Dendritic cell treated with granulocyte-macrophage colony-stimulating factor and Interleukin-4, amounts not matched to agents 40 ng/mL and 50 ng/mL, for 4 days (primary cell): ENCODE measurements at regions of chr6 and their contacts with region 1.

Region 1: DNA sequence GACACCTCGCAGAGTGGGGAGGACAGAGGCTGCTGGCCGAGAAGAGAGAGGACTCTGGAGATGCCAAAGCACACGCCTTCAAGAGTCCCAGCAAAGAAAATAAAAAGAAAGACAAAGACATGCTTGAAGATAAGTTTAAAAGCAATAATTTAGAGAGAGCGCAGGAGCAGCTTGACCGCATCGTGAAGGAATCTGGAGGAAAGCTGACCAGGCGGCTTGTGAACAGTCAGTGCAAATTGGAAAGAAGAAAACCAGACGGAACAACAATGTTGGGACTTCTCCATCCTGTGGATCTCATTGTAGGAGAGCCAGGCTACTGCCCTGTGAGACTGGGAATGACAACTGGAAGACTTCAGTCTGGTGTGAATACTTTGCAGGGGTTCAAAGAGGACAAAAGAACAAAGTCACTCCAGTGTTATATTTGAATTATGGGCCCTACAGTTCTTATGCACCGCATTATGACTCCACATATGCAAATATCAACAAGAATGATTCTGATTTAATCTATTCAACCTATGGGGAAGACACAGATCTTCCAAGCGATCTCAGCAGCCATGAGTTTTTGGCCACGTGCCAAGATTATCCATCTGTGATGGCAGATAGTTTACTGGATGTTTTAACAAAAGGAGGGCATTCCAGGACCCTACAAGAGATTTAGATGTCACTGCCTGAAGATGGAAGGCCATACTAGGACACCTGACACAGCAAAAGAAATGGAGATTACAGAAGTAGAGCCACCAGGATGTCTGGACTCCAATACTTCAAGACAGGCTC is 52.2 kb downstream of the REV3L start:
- H3K4me3 Mint-ChIP-seq: no peak overlapping the region
- H3K27ac Mint-ChIP-seq: no peak overlapping the region
- H3K4me1 Mint-ChIP-seq: peaks cover 27% of the 10 kb centered on the region
- H3K27me3 Mint-ChIP-seq: no peaks in the 10 kb centered on the region

Region 2: DNA sequence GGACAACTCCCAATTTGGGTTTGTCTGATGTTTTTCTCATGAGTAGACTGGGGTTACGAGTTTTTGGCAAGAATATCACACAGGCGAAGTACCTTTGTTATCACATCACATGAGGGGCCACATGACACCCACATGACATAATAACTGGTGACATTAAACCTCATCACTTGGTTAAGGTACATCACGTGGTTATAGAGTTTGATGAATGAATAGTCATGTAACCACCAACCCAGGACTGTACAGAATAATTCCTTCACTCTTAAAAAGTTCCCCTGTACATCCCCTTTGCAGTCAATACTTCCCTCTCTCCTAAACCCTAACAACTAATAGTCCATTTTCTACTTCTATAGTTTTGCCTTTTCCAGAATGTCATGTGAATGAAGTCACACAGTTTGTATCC is 31.2 kb before region 1 on chr6:
- intact Hi-C with region 1: loop called (anchors 5 kb)
- H3K4me3 Mint-ChIP-seq: no peak overlapping the region
- H3K27ac Mint-ChIP-seq: no peak overlapping the region
- H3K4me1 Mint-ChIP-seq: no peaks in the 10 kb centered on the region
- H3K27me3 Mint-ChIP-seq: no peaks in the 10 kb centered on the region